ACHN (cell line): ENCODE measurements at regions of chr10 and their contacts with region 1.

Region 1: GRCh38 chr10:68184546-68184945 is 47.4 kb downstream of the ATOH7 start:
- DNase-seq: no peak

Region 2: GRCh38 chr10:67492317-67493019 is 692.1 kb before region 1 on chr10:
- in situ Hi-C with region 1: no loop called
- DNase-seq: no peak

Region 3: GRCh38 chr10:68074775-68075549 is 109.6 kb before region 1 on chr10 and contains the start of gene HERC4:
- in situ Hi-C with region 1: loop called (anchors 25 kb)
- DNase-seq: peak; percentile 96